Activated CD4-positive, alpha-beta memory T cell treated with anti-CD3 and anti-CD28 coated beads, Interleukin-2, amount 10 ng/mL, durations not matched to agents 7 days and 5 days (primary cell): ENCODE measurements at regions of chr19 and their contacts with region 1.

Region 1: DNA sequence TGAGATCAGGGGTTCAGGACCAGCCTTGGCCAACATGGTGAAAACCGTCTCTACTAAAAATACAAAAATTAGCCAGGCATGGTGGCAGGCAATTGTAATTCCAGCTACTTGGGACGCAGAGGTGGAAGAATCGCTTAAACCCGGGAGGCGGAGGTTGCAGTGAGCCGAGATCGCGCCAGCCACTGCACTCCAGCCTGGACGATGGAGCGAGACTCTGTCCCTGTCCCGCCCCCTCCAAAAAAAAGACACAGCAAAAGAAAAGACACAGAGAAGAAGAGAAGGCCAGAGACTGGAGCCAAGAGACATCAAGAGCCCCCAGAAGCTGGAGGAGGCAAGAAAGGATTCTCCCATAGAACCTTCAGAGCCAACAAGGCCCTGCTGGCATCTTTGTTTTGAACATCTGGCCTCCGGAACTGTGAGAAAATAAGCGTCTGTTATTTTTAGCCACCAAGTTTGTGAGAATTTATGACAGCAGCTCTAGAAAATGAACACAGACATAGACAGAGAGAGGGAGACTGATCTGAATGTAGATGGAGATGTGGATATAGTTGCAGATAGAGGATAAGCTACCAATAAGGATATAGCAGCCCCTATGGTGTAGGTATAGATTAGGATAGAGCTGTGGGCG is 25.7 kb upstream of the PNMA8B start:
- DNase-seq: no peak
- H3K4me3 Mint-ChIP-seq: no peak overlapping the region
- H3K27ac Mint-ChIP-seq: no peak overlapping the region
- H3K4me1 Mint-ChIP-seq: peaks cover 37% of the 10 kb centered on the region
- H3K27me3 Mint-ChIP-seq: no peaks in the 10 kb centered on the region

Region 2: GRCh38 chr19:46392243-46392801 is 129.0 kb before region 1 on chr19:
- CTCF ChIA-PET with region 1: interaction called, 10 read pairs
- POLR2A ChIA-PET with region 1: no interaction called
- DNase-seq: no peak
- H3K4me3 Mint-ChIP-seq: no peak overlapping the region
- H3K27ac Mint-ChIP-seq: peak overlapping the region; percentile 11
- H3K4me1 Mint-ChIP-seq: peaks cover 3% of the 10 kb centered on the region
- H3K27me3 Mint-ChIP-seq: no peaks in the 10 kb centered on the region

Region 3: DNA sequence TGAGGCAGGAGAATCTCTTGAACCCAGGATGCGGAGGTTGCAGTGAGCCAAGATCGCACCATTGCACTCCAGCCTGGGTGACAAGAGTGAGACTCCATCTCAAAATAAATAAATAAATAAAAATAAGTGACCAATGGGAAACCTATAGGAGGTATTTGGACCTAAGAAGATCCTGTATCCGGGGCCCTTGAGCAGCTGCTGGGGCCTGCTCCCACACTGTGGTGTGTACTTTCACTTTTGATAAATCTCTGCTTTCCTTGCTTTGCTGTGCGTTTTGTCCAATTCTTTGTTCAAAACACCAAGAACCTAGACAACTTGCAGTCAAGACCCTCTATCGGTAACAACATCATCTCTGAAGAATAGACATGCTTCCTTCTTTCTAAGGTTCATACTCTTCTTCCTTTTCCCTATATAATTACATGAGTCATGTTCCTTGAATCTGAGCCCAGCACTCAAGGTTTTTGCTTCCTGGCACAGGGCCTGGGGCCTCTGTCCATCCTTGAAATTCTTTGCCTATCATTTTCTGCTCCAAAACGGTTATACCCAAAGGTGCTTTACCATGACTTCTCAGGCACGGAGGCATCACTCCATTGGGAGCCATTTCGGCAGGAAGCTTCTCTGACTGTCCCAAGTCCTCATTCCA is 78.4 kb before region 1 on chr19:
- CTCF ChIA-PET with region 1: no interaction called
- POLR2A ChIA-PET with region 1: no interaction called
- DNase-seq: no peak
- H3K4me3 Mint-ChIP-seq: no peak overlapping the region
- H3K27ac Mint-ChIP-seq: no peak overlapping the region
- H3K4me1 Mint-ChIP-seq: no peaks in the 10 kb centered on the region
- H3K27me3 Mint-ChIP-seq: peaks cover 9% of the 10 kb centered on the region

Region 4: DNA sequence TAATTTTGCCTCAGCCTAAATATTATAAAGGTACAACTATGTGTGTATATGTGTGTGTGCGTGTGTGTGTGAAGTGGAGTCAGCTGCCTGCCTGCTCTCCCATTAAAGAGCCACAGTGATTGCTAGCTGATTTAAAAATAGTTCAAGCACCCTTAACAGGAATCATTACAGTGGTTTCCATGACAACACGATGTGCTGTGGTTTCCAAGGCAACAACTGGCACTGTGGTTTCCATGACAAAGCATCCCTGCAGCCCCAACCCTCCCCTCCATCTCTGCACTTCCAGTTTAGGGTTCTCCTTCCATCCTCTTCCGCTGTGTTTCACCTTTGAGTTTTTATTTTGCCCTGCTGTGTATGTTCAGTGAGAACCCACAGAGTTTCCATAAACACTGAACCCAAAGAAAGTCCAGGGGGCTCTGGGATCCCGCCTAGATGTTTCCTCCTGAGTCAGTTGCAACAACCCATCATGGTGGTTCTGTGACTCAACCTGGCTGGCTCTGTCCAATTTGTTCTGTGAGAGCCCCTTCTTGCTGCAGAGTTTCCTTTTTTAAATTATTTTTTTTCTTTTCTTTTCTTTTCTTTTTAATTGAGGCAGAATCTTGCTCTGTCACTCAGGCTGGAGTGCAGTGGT is 42.9 kb before region 1 on chr19:
- CTCF ChIA-PET with region 1: no interaction called
- POLR2A ChIA-PET with region 1: no interaction called
- DNase-seq: no peak
- H3K4me3 Mint-ChIP-seq: no peak overlapping the region
- H3K27ac Mint-ChIP-seq: no peak overlapping the region
- H3K4me1 Mint-ChIP-seq: peaks cover 1% of the 10 kb centered on the region
- H3K27me3 Mint-ChIP-seq: peaks cover 36% of the 10 kb centered on the region

Region 5: DNA sequence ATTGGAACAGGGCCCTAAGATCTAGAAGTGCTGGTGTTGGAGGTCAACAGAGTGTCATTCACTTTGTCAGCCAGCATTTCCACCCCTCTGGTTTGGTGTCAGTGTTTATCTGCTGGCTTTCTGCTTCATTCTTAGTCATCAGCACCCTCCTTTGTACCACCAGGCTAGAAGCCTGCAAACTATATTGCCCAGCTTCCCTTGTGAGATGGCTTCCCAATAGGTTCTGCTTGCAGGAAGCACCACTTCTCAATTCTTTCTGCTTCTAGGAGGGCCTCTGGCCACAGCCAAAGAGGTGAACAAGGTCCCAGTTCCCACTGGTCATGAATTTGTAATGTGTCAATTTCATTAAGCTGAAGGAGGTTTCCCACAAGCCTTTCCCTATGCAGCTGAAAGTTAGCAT is 43.3 kb after region 1 on chr19:
- CTCF ChIA-PET with region 1: no interaction called
- POLR2A ChIA-PET with region 1: no interaction called
- DNase-seq: no peak
- H3K4me3 Mint-ChIP-seq: no peak overlapping the region
- H3K27ac Mint-ChIP-seq: no peak overlapping the region
- H3K4me1 Mint-ChIP-seq: peaks cover 4% of the 10 kb centered on the region
- H3K27me3 Mint-ChIP-seq: no peaks in the 10 kb centered on the region